CD8-positive, alpha-beta memory T cell (primary cell): ENCODE measurements at regions of chr20 and their contacts with region 1.

Region 1: DNA sequence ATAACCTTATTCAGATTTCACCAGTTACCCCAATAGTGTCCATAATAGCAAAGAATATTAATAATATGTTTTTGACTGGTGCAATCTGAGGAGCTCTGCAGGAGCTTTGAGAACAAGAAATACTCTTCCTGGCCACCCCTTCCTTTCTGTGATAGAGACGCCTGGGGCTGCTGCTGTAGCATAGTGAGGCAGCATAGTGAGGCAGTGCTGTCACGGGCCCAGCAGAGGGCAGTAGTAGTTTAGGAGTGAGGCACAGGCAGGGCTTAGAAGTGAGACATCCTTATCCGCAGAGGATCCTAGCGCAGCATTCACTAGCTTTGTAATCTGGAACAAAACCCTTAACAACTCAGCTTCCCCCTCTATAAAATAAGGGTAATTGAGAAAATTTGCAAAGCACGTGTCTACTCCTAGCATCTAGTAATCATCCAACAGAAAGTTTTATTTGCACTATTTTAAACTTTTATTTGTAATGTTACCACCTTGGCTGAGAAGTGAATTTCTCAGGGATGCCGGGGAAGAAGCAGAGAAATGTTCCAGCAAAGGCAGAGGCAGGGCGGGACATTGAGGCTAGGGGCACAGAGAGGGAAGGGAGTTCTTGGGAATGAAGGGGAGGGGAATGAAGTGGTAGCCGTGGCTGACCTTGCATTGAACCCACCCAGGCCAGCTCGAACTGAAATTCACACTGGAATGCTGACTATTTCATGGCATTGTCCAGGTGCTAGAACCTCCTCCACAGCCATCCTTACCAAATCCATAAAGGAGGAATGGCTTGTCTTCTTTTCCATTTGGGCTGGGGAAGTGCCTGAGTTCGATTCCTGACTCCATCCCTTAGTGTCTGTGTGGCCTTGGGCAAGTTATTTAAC is 78.8 kb downstream of the CDS2 start:
- DNase-seq: peak; percentile 31 to 76 (median 51)
- H3K4me3 ChIP-seq: no peak overlapping the region
- H3K4me3 Mint-ChIP-seq: no peak overlapping the region
- H3K27ac ChIP-seq: no peak overlapping the region
- H3K27ac Mint-ChIP-seq: peak overlapping the region in 1 of 8 donors; percentile 92
- H3K4me1 ChIP-seq: no peaks in the 10 kb centered on the region
- H3K4me1 Mint-ChIP-seq: peaks cover 4 to 6% (median 4%) of the 10 kb centered on the region in 3 donors
- H3K27me3 ChIP-seq: no peaks in the 10 kb centered on the region
- H3K27me3 Mint-ChIP-seq: no peaks in the 10 kb centered on the region

Region 2: GRCh38 chr20:5215672-5216304 is 10.2 kb after region 1 on chr20:
- CTCF ChIA-PET with region 1: interaction called, 37 read pairs
- POLR2A ChIA-PET with region 1: no interaction called
- DNase-seq: no peak
- H3K4me3 ChIP-seq: no peak overlapping the region
- H3K4me3 Mint-ChIP-seq: no peak overlapping the region
- H3K27ac ChIP-seq: no peak overlapping the region
- H3K27ac Mint-ChIP-seq: no peak overlapping the region
- H3K4me1 ChIP-seq: no peaks in the 10 kb centered on the region
- H3K4me1 Mint-ChIP-seq: no peaks in the 10 kb centered on the region
- H3K27me3 ChIP-seq: no peaks in the 10 kb centered on the region
- H3K27me3 Mint-ChIP-seq: no peaks in the 10 kb centered on the region

Region 3: DNA sequence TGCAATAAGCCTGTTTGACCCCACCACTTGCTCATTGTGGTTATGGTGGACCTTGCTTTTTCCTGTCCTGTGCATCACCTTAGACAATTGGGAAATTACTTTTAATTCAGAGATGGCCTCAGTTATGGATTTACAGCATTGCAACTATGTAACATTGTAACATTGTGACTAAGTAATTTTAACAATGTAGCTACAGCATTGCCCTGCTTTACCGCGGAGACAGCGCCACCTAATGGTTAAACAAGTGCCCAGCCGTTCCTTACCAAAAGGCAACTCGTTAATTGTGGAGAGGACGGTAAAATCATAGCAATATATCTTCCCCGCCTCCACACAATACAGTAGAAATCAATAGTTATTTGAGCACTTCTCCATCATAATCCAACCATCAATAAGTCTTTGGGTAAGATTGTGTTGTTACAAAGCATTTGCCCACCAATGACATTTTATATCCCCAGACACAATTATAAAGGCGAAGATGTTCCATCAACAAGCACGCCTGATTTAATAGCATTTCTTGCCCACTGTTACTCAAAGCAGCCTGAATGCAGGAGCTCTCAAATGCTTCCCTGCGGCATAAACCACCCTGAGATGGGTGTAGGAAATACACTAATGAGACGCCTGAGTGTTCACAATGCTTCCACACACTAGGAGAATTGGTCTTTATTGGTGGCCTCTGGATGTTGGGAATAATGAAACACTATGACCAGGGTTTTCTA is 17.5 kb after region 1 on chr20:
- CTCF ChIA-PET with region 1: interaction called, 37 read pairs
- POLR2A ChIA-PET with region 1: no interaction called
- DNase-seq: peak; percentile 17 to 68 (median 29)
- H3K4me3 ChIP-seq: no peak overlapping the region
- H3K4me3 Mint-ChIP-seq: no peak overlapping the region
- H3K27ac ChIP-seq: no peak overlapping the region
- H3K27ac Mint-ChIP-seq: peak overlapping the region in 1 of 8 donors; percentile 25
- H3K4me1 ChIP-seq: no peaks in the 10 kb centered on the region
- H3K4me1 Mint-ChIP-seq: peaks cover 2 to 6% (median 5%) of the 10 kb centered on the region in 3 donors
- H3K27me3 ChIP-seq: no peaks in the 10 kb centered on the region
- H3K27me3 Mint-ChIP-seq: no peaks in the 10 kb centered on the region

Region 4: DNA sequence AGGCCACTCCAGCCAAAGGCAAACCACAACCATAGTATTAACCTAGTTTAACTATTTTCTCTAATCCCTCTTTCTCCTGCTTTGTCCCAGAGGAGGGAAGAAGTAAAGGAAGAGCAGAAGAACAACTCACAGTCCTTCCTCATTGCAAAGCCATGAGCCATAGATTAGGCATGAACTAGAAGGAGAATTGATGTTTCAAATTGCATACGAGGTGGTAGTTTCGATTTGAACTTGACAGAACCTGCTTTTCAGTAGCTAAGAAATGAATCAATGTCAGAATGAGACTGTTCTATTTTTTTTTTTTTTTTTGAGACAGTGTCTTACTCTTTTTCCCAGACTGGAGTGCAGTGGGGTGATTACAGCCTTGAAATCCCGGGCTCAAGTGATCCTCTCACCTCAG is 62.9 kb after region 1 on chr20:
- CTCF ChIA-PET with region 1: no interaction called
- POLR2A ChIA-PET with region 1: no interaction called
- DNase-seq: no peak
- H3K4me3 ChIP-seq: no peak overlapping the region
- H3K4me3 Mint-ChIP-seq: peak overlapping the region in 5 of 7 donors; percentile 54 to 67 (median 63)
- H3K27ac ChIP-seq: no peak overlapping the region
- H3K27ac Mint-ChIP-seq: peak overlapping the region in 7 of 8 donors; percentile 32 to 92 (median 76)
- H3K4me1 ChIP-seq: peaks cover 23% of the 10 kb centered on the region
- H3K4me1 Mint-ChIP-seq: peaks cover 37 to 42% (median 38%) of the 10 kb centered on the region in 3 donors
- H3K27me3 ChIP-seq: no peaks in the 10 kb centered on the region
- H3K27me3 Mint-ChIP-seq: peaks cover 0 to 13% of the 10 kb centered on the region in 2 donors

Region 5: GRCh38 chr20:5282561-5282960 is 77.0 kb after region 1 on chr20:
- CTCF ChIA-PET with region 1: no interaction called
- POLR2A ChIA-PET with region 1: no interaction called
- DNase-seq: no peak
- H3K4me3 ChIP-seq: no peak overlapping the region
- H3K4me3 Mint-ChIP-seq: no peak overlapping the region
- H3K27ac ChIP-seq: no peak overlapping the region
- H3K27ac Mint-ChIP-seq: peak overlapping the region in 1 of 8 donors; percentile 22
- H3K4me1 ChIP-seq: no peaks in the 10 kb centered on the region
- H3K4me1 Mint-ChIP-seq: peaks cover 0 to 5% (median 0%) of the 10 kb centered on the region in 3 donors
- H3K27me3 ChIP-seq: no peaks in the 10 kb centered on the region
- H3K27me3 Mint-ChIP-seq: peaks cover 24 to 43% of the 10 kb centered on the region in 2 donors